ACHN (cell line): ENCODE measurements at regions of chr2 and their contacts with region 1.

Region 1: GRCh38 chr2:70789304-70790135 is 923 bp downstream of the FIGLA start:
- DNase-seq: peak; percentile 64

Region 2: GRCh38 chr2:70283500-70284191 is 505.9 kb before region 1 on chr2:
- in situ Hi-C with region 1: no loop called
- DNase-seq: no peak

Region 3: DNA sequence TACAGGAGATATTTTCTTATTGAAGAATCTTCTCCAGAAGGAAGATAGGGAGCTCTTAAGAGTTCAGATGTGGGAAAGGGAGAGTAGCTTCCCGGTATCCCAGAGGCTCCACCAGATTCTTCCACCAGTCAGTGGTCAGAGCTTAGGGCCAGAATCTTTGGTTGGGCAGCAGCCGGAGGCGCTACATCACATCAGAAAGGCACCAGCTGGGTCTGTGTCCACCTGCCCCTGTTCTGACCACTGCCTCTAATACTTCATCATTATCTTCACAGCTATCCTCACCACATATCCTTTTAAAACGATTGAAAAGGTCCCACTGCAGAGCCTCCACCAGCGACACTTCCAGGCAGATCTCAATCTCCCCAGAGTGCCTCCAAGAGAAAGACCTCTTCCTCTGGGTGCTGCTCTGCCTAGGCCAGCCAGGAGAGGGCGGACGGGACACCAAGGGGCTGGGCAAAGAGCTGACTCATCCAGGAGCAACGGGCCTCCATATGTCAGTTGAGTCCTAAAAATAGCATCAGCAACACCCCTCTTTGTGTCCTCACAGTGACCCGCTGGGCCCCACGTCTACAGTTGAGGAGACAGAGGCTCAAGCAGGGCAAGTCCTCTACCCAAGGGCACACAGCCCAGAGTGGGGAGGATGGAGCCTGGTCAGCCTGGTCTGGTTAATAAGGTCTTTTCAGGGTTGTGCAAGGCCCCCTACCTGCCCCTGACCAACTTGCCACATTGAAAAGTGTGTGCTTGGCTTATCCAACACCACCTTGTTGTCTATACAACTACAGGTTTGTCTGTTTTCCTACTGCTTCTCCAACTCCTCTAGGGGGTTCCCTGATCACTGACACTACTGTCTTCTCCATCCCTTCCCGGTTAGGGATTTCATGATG is 102.7 kb before region 1 on chr2:
- in situ Hi-C with region 1: loop called (anchors 25 kb)
- DNase-seq: peak; percentile 71

Region 4: GRCh38 chr2:71243634-71244304 is 454.2 kb after region 1 on chr2:
- in situ Hi-C with region 1: no loop called
- DNase-seq: no peak